BJ (cell line): ENCODE measurements at regions of chr14 and their contacts with region 1.

Region 1: DNA sequence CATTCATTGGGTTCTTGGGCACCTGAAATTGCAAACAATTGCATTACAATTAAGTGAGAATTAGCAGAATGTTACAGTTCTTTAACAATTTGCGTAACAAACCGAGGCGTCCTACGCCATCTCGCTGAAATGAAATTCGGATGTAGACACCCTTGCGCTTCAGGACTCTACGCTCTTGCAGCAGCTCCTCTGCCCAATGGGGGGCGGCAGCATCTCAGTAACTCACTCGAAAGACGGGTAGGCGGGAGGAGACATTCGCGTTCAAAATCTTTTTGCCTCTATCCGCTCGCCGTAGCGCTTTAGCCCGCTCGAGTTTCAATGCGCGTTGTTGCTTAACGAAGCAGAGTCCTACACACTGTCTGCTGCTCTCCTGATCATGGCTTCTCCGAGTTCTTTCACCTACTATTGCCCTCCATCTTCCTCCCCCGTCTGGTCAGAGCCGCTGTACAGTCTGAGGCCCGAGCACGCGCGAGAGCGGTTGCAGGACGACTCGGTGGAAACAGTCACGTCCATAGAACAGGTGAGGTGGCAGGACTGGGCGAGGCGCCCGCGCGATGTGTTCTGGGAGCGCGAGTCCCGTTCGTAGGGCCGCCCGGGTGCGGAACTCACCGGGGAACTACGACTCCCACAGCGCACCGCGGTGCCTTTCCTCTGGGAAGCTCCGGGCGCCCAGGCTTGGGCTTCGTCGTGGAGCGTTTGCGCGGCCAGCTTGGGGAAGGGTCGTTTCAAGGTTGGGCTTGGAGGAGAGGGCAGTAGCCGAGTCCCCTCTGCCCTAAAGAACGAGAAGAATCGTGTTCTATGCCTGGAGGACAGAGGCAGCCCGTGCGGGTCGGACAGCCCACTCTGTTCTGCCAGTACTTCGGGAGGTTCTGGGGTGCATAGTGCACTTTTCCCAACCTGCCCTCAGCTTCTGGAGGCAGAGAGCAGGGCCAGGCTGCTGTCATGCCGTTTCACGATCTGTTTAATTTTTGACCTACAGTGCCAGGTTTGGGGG is at the start of gene FNTB:
- DNase-seq: peak; percentile 87
- H3K4me3 ChIP-seq: peak within 1 kb of the TSS; percentile 67
- H3K27me3 ChIP-seq: 0 out of 2 replicates have a peak, but pooled peaks cover 3% of the 10 kb centered on the region
- CTCF ChIP-seq: peak; percentile 84
- polyA plus RNA-seq, gene FNTB: 27.7 and 33.8 TPM in 2 replicates

Region 2: GRCh38 chr14:64974563-64974962 is 12.3 kb before region 1 on chr14:
- CTCF ChIA-PET with region 1: interaction called, 14 read pairs
- POLR2A ChIA-PET with region 1: no interaction called
- DNase-seq: no peak
- H3K4me3 ChIP-seq: no peak overlapping the region
- H3K27me3 ChIP-seq: peaks cover 4% of the 10 kb centered on the region
- CTCF ChIP-seq: no peak

Region 3: DNA sequence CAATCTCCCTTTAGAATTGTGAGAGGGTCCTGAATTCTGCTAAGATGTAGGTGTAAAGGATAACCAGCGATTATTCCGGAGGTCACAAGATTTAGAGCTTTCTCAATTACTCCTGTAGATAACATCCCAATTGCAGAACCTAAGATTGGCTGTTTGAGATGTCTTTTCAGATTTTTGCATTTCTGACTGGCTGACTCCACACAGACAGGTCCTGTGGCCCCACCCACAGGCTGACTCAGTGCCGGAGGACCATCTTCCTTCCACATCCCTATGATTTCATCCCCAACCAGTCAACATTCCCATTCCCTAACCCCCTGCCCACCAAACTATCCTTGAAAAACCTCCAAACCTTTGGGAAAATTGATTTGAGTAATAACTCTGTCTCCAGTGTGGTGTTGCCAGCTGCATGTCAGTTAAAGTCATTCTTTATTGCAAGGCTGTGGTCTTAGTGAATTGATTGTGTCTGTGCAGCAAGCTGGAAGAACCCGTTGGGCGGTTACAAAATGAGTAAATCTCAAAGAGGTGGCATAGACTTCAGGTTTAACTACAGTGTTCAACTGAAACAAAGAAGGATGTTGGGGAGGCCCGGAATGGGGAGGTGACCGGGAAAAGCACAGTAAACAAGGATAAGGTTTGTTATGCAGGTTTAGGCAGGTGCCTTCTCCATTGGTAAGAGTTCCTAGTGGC is 10.4 kb after region 1 on chr14:
- CTCF ChIA-PET with region 1: interaction called, 10 read pairs
- POLR2A ChIA-PET with region 1: no interaction called
- DNase-seq: no peak
- H3K4me3 ChIP-seq: no peak overlapping the region
- H3K27me3 ChIP-seq: no peaks in the 10 kb centered on the region
- CTCF ChIP-seq: no peak

Region 4: GRCh38 chr14:65019944-65020566 is 33.2 kb after region 1 on chr14:
- CTCF ChIA-PET with region 1: interaction called, 60 read pairs
- POLR2A ChIA-PET with region 1: no interaction called
- DNase-seq: no peak
- H3K4me3 ChIP-seq: no peak overlapping the region
- H3K27me3 ChIP-seq: no peaks in the 10 kb centered on the region
- CTCF ChIP-seq: peak; percentile 69